Colonic mucosa (tissue), 4 donors: ENCODE measurements at regions of chr3 and their contacts with region 1.

Region 1: DNA sequence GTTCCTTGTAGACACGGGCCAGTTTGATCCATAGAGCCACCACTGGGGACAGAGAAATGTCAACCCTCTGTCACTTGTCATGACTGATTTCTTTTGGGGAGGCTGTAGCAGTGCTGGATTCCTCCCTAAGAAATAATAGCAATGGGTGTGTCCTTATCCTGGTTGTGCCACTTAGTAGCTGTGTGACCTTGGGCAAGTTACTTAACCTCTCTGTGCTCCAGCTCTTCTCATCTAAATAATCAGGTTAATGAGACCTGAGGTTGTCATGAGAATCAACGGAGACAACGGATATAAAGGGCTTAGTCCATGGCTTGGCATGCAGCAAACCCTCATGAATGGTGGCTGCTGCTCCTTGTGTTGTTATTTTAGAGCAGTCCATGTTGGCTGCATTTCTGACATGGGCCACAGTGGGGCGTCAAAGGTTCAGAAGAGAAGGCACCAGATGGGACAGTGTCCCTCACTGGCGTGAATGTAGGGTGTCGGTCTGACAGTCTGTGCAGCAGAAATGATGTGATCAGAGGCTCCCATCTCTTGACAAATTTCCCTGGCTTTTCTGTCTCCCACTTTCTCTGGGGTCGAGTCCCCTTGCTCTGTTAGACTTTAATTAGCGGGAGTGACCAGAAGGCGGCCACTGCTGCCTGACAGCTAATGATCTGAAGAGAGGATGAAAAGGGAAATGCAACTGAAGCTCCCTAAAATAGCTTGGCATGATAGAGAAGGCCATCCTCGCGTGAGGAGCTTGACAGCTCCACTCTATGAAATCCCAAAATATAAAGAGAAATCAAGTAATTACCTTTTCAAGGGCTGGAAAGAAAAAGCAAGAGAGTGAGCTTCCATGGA is 209.4 kb downstream of the CADPS start:
- DNase-seq: peak; percentile 82
- H3K4me3 ChIP-seq: no peak overlapping the region
- H3K27ac ChIP-seq: no peak overlapping the region
- H3K4me1 ChIP-seq: no peaks in the 10 kb centered on the region
- H3K27me3 ChIP-seq: no peaks in the 10 kb centered on the region
- CTCF ChIP-seq: peak; percentile 69

Region 2: GRCh38 chr3:62493109-62493801 is 172.6 kb before region 1 on chr3:
- intact Hi-C with region 1: no loop called
- DNase-seq: no peak
- H3K4me3 ChIP-seq: no peak overlapping the region
- H3K27ac ChIP-seq: no peak overlapping the region
- H3K4me1 ChIP-seq: no peaks in the 10 kb centered on the region
- H3K27me3 ChIP-seq: no peaks in the 10 kb centered on the region
- CTCF ChIP-seq: no peak

Region 3: GRCh38 chr3:62863653-62864052 is 197.8 kb after region 1 on chr3:
- intact Hi-C with region 1: loop called (anchors 10 kb)
- DNase-seq: no peak
- H3K4me3 ChIP-seq: no peak overlapping the region
- H3K27ac ChIP-seq: no peak overlapping the region
- H3K4me1 ChIP-seq: no peaks in the 10 kb centered on the region
- H3K27me3 ChIP-seq: no peaks in the 10 kb centered on the region
- CTCF ChIP-seq: no peak

Region 4: GRCh38 chr3:63193629-63194028 is 527.8 kb after region 1 on chr3:
- intact Hi-C with region 1: loop called (anchors 5 kb)
- DNase-seq: no peak
- H3K4me3 ChIP-seq: no peak overlapping the region
- H3K27ac ChIP-seq: no peak overlapping the region
- H3K4me1 ChIP-seq: no peaks in the 10 kb centered on the region
- H3K27me3 ChIP-seq: no peaks in the 10 kb centered on the region
- CTCF ChIP-seq: peak; percentile 30

Region 5: GRCh38 chr3:63232739-63233365 is 567.0 kb after region 1 on chr3:
- intact Hi-C with region 1: loop called (anchors 10 kb)
- DNase-seq: no peak
- H3K4me3 ChIP-seq: no peak overlapping the region
- H3K27ac ChIP-seq: no peak overlapping the region
- H3K4me1 ChIP-seq: no peaks in the 10 kb centered on the region
- H3K27me3 ChIP-seq: no peaks in the 10 kb centered on the region
- CTCF ChIP-seq: peak; percentile 27